Activated B cell treated with CpG ODN at 0.5 μM for 24 hours (primary cell): ENCODE measurements at regions of chr3 and their contacts with region 1.

Region 1: DNA sequence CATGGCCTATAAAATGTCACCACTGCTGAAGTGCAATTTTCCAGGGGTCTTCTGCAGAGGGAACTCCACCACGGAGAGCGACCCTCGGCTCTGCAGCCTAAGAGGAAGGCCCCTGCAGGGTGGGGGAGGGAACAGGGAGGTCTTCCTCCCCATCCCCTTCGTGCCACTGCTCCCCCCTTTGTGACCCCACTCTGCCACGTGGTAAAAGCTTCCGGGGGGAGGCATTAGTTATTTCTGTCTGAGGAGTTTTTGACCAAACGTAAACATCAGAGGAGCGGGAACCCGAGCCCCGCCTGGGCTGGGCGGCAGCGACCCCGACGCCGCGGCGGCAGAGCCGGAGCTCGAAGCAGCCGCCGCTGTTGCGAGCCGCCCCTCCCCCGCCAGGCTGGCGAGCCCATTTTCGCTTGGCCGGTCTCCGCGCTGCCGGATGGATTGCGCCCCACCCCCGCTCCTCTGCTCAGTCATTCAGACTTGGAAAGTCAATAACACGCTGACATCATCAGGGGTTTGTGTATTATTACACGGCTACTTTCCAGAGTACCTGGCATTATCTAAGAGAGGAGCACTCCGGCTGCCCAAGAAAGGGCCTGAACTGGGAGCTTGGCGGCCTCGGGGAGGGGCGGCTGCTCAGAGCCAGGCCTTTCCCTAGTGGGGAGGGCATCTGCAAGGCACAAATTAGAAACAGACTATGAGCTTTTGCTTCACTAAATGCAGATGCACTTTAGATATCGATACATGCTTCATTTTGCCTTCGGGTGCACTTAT is 162.5 kb upstream of the TBL1XR1 start:
- DNase-seq: peak; percentile 98
- ATAC-seq: peak; percentile 74
- H3K4me3 Mint-ChIP-seq: peak overlapping the region; percentile 85
- H3K27ac Mint-ChIP-seq: peak overlapping the region; percentile 98
- H3K4me1 Mint-ChIP-seq: peaks cover 67% of the 10 kb centered on the region
- H3K27me3 Mint-ChIP-seq: no peaks in the 10 kb centered on the region
- CTCF ChIP-seq: no peak

Region 2: GRCh38 chr3:176789281-176789705 is 570.5 kb before region 1 on chr3:
- CTCF ChIA-PET with region 1: no interaction called
- POLR2A ChIA-PET with region 1: no interaction called
- intact Hi-C with region 1: no loop called
- DNase-seq: no peak
- ATAC-seq: no peak
- H3K4me3 Mint-ChIP-seq: no peak overlapping the region
- H3K27ac Mint-ChIP-seq: no peak overlapping the region
- H3K4me1 Mint-ChIP-seq: no peaks in the 10 kb centered on the region
- H3K27me3 Mint-ChIP-seq: no peaks in the 10 kb centered on the region
- CTCF ChIP-seq: no peak

Region 3: DNA sequence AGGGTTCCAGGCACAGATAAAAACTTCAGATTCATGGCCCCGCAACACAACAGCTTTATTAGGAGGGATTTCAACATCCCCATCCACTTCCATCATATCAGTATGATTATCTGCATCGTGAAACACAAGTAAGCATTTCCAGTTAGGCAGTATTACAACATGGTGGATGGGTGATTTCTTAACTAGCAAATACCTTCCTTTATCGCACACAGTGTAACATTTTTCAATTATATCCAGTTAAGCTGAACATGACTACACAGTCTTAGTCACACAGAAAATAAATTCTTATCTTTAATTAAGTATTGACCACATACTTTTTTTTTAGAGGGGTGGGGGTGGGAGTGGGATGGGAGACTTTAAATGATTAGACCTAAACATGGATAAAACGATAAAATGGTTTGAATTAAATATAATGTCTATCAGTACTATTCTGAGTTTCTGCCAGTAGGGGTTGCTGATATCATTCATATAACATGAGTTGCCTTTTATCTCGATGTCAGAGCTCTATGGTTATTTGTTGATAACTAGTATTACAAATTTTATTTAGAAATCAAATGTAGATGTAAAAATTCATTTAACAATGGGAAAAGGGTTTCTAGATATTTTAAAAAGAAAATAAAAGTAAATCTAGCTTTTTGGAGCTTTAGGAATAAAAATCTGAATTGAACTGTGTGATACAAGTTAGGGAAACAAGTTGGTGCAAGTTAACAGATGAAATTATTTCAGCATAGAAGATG is 309.1 kb before region 1 on chr3:
- CTCF ChIA-PET with region 1: interaction called, 18 read pairs
- POLR2A ChIA-PET with region 1: interaction called, 13 read pairs
- intact Hi-C with region 1: loop called (anchors 1 kb)
- DNase-seq: no peak
- ATAC-seq: peak; percentile 77
- H3K4me3 Mint-ChIP-seq: no peak overlapping the region
- H3K27ac Mint-ChIP-seq: peak overlapping the region; percentile 56
- H3K4me1 Mint-ChIP-seq: peaks cover 14% of the 10 kb centered on the region
- H3K27me3 Mint-ChIP-seq: no peaks in the 10 kb centered on the region
- CTCF ChIP-seq: peak; percentile 69

Region 4: DNA sequence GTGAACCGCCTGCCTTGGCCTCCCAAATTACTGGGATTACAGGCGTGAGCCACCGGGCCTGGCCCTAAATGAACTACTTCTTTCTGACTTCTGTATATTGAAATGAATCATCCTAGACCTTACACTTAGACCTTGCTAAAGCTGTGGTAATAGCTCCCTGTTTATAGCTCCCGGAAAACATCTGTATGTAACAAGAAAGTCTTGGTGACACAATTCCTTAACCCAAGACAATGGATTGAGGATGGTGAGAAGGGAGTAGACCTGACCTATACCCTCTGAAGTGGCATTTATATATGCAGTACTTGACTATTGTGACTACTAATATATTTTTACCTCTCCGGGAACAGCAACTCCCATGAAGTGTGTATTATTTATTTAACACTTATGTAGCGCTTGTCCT is 114.5 kb before region 1 on chr3:
- CTCF ChIA-PET with region 1: interaction called, 3 read pairs
- POLR2A ChIA-PET with region 1: interaction called, 16 read pairs
- intact Hi-C with region 1: loop called (anchors 1 kb)
- DNase-seq: no peak
- ATAC-seq: no peak
- H3K4me3 Mint-ChIP-seq: no peak overlapping the region
- H3K27ac Mint-ChIP-seq: peak overlapping the region; percentile 80
- H3K4me1 Mint-ChIP-seq: peaks cover 52% of the 10 kb centered on the region
- H3K27me3 Mint-ChIP-seq: no peaks in the 10 kb centered on the region
- CTCF ChIP-seq: no peak

Region 5: DNA sequence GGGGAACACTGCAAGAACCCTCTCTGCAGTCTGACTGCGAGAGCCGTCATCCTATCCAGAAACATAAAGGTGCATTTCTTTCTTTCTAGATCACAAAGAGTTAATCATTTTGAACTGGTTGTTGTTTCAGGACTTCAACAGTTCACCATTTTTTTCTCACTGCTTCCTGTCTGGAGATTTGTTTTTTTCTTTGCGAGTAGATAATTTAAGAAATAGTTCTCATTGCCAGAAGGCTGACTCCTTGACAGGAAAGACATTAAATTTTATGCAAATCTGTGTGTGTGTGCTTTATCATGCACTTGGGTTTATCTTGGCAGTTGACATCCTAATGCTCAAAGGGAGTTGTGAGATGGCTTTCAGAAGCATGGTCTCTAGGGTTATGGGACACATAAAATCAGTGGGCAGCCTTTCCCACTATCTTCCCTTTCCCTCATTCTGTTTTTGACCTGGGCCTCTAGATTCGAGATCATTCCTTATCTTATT is 39.0 kb before region 1 on chr3:
- CTCF ChIA-PET with region 1: no interaction called
- POLR2A ChIA-PET with region 1: interaction called, 55 read pairs
- intact Hi-C with region 1: loop called (anchors 1 kb)
- DNase-seq: no peak
- ATAC-seq: peak; percentile 22
- H3K4me3 Mint-ChIP-seq: peak overlapping the region; percentile 57
- H3K27ac Mint-ChIP-seq: peak overlapping the region; percentile 77
- H3K4me1 Mint-ChIP-seq: peaks cover 87% of the 10 kb centered on the region
- H3K27me3 Mint-ChIP-seq: no peaks in the 10 kb centered on the region
- CTCF ChIP-seq: no peak

Region 6: GRCh38 chr3:177371888-177372287 is 12.1 kb after region 1 on chr3:
- CTCF ChIA-PET with region 1: interaction called, 4 read pairs
- POLR2A ChIA-PET with region 1: interaction called, 13 read pairs
- intact Hi-C with region 1: loop called (anchors 1 kb)
- DNase-seq: no peak
- ATAC-seq: no peak
- H3K4me3 Mint-ChIP-seq: no peak overlapping the region
- H3K27ac Mint-ChIP-seq: no peak overlapping the region
- H3K4me1 Mint-ChIP-seq: peaks cover 29% of the 10 kb centered on the region
- H3K27me3 Mint-ChIP-seq: no peaks in the 10 kb centered on the region
- CTCF ChIP-seq: no peak

Region 7: DNA sequence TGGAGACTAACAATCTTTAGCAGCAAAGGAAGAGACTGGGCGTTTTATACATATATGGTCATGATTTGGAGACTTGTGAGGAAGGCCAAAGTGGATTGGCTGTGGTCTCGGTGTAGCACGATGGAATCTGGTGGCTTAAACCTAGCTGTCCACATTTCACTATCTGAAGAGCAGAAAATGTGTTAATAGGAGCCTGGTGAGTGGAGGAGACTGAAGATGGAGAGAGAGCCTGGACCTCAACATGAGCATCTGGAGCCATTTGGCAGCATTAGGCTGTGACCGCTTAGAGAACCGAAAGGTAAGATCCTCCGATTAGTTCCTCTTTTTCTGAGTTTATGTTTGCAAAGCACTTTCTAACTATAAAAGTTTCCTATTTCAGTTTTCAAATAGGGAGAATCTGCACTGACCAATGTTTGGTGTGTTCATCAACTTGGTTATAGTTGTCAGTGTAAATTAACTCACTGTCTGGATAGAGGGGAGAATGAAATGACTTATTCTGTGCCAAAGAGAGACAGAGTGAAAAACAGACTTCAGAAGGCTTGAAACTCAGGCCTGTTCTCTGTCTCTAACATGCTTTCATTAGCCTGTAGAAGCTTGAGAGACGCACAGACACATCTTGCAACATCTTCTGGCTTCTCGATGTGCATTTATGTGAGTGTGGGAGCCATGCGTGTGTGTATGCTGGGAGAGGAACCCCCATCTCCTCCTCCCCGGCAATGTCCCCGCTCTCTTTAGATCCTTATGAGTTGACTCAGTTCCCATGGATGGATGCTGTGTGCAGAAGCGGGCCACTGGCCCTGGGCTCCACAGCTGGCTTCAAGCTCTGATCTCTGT is 82.3 kb after region 1 on chr3:
- CTCF ChIA-PET with region 1: no interaction called
- POLR2A ChIA-PET with region 1: interaction called, 9 read pairs
- intact Hi-C with region 1: loop called (anchors 2 kb)
- DNase-seq: peak; percentile 18
- ATAC-seq: peak; percentile 95
- H3K4me3 Mint-ChIP-seq: no peak overlapping the region
- H3K27ac Mint-ChIP-seq: peak overlapping the region; percentile 80
- H3K4me1 Mint-ChIP-seq: peaks cover 20% of the 10 kb centered on the region
- H3K27me3 Mint-ChIP-seq: no peaks in the 10 kb centered on the region
- CTCF ChIP-seq: no peak

Region 8: GRCh38 chr3:178385280-178385952 is 1025.6 kb after region 1 on chr3:
- CTCF ChIA-PET with region 1: no interaction called
- POLR2A ChIA-PET with region 1: no interaction called
- intact Hi-C with region 1: loop called (anchors 10 kb)
- DNase-seq: no peak
- ATAC-seq: peak; percentile 28
- H3K4me3 Mint-ChIP-seq: no peak overlapping the region
- H3K27ac Mint-ChIP-seq: no peak overlapping the region
- H3K4me1 Mint-ChIP-seq: no peaks in the 10 kb centered on the region
- H3K27me3 Mint-ChIP-seq: no peaks in the 10 kb centered on the region
- CTCF ChIP-seq: peak; percentile 49